Panc1 (cell line): ENCODE measurements at regions of chr12 and their contacts with region 1.

Region 1: GRCh38 chr12:132414634-132415326 is 75.2 kb upstream of the FBRSL1 start:
- DNase-seq: peak; percentile 27
- ATAC-seq: peak; percentile 95
- H3K4me3 ChIP-seq: peak overlapping the region in 1 of 2 experiments; percentile 37; a peak in 2 of 4 replicates
- H3K27ac ChIP-seq: no peak overlapping the region
- H3K4me1 ChIP-seq: peaks cover 14% of the 10 kb centered on the region
- H3K27me3 ChIP-seq: no peaks in the 10 kb centered on the region; the same call in 1 of the 2 replicates
- CTCF ChIP-seq: peak; percentile 92

Region 2: DNA sequence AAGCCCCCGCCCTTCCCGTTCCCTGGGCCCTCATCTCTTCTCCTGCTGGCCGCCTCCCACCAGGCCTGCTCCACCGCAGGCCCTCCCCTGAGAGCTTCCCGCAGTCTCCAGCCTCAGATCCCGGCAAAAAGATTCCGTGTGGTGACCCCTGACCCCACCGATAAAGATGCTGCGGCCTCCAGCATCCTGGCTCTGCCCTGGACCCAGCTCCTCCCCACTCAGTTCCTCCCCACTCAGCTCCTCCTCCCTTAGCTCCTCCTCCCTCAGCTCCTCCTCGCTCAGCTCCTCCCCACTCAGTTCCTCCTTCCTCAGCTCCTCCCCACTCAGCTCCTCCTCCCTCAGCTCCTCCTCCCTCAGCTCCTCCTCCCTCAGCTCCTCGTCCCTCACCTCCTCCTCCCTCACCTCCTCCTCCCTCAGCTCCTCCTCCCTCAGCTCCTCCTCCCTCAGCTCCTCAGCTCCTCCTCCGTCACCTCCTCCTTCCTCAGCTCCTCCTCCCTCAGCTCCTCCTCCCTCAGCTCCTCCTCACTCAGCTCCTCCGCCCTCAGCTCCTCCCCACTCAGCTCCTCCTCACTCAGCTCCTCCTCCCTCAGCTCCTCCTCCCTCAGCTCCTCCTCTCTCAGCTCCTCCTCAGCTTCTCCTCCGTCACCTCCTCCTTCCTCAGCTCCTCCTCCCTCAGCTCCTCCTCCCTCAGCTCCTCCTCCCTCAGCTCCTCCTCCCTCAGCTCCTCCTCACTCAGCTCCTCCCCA is 253.6 kb before region 1 on chr12:
- CTCF ChIA-PET with region 1: interaction called, 11 read pairs
- POLR2A ChIA-PET with region 1: no interaction called
- in situ Hi-C with region 1: no loop called
- intact Hi-C with region 1: loop called (anchors 10 kb)
- DNase-seq: no peak
- ATAC-seq: peak; percentile 4; the same call in 1 of the 2 replicates
- H3K4me3 ChIP-seq: no peak overlapping the region
- H3K27ac ChIP-seq: no peak overlapping the region
- H3K4me1 ChIP-seq: peaks cover 5% of the 10 kb centered on the region; the same call in 1 of the 2 replicates
- H3K27me3 ChIP-seq: no peaks in the 10 kb centered on the region
- CTCF ChIP-seq: no peak

Region 3: GRCh38 chr12:132523576-132524331 is 109.0 kb after region 1 on chr12:
- CTCF ChIA-PET with region 1: interaction called, 15 read pairs
- POLR2A ChIA-PET with region 1: no interaction called
- in situ Hi-C with region 1: no loop called
- intact Hi-C with region 1: loop called (anchors 5 kb)
- DNase-seq: peak; percentile 17
- ATAC-seq: peak; percentile 81
- H3K4me3 ChIP-seq: peak overlapping the region in 1 of 2 experiments; percentile 6; a peak in 1 of 4 replicates
- H3K27ac ChIP-seq: peak overlapping the region; percentile 65
- H3K4me1 ChIP-seq: peaks cover 66% of the 10 kb centered on the region
- H3K27me3 ChIP-seq: no peaks in the 10 kb centered on the region
- CTCF ChIP-seq: peak; percentile 95

Region 4: DNA sequence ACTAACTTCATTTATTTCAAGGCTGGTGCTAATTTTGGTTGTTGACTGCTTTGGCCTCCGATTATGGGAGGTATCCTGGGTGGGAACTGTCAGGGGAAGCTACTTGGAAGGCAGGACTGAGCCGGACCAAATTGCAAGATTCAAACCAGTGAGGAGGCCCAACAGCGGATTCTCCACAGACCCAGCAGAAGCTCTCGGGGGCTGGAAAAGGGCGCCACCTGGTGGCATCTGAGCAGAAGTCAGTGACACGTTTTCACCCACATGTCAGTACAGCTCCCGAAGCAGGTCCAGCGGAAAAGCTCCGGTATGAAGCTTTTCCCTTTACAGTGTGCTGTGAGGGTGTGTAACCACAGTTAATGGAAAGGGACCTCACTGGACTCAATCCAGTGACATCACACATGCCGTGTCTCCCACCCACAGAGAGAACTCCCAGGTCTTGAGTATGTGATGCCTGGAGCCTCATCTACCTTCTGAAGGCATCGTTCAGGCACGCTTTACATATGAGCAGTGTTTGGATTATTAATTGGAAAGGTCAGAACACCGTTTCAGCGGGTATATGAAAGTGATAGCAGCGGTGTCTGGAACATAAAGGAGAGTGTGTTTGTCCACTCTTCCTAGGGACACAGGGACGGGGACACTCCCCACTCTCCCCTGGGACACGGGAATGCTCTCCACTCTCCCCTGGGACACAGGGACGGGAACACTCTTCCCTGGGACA is 200.2 kb after region 1 on chr12:
- CTCF ChIA-PET with region 1: interaction called, 10 read pairs
- POLR2A ChIA-PET with region 1: no interaction called
- in situ Hi-C with region 1: no loop called
- intact Hi-C with region 1: loop called (anchors 2 kb)
- DNase-seq: peak; percentile 63
- ATAC-seq: peak; percentile 87
- H3K4me3 ChIP-seq: no peak overlapping the region
- H3K27ac ChIP-seq: no peak overlapping the region; the same call in 1 of the 2 replicates
- H3K4me1 ChIP-seq: no peaks in the 10 kb centered on the region
- H3K27me3 ChIP-seq: peaks cover 6% of the 10 kb centered on the region; the same call in 1 of the 2 replicates
- CTCF ChIP-seq: peak; percentile 93

Region 5: GRCh38 chr12:132866251-132866828 is 451.6 kb after region 1 on chr12:
- CTCF ChIA-PET with region 1: no interaction called
- POLR2A ChIA-PET with region 1: no interaction called
- in situ Hi-C with region 1: no loop called
- intact Hi-C with region 1: no loop called
- DNase-seq: no peak
- ATAC-seq: no peak
- H3K4me3 ChIP-seq: no peak overlapping the region
- H3K27ac ChIP-seq: no peak overlapping the region
- H3K4me1 ChIP-seq: no peaks in the 10 kb centered on the region
- H3K27me3 ChIP-seq: no peaks in the 10 kb centered on the region
- CTCF ChIP-seq: no peak